ENCODE measurements at regions of chr1 and their contacts with region 1.

Region 1: DNA sequence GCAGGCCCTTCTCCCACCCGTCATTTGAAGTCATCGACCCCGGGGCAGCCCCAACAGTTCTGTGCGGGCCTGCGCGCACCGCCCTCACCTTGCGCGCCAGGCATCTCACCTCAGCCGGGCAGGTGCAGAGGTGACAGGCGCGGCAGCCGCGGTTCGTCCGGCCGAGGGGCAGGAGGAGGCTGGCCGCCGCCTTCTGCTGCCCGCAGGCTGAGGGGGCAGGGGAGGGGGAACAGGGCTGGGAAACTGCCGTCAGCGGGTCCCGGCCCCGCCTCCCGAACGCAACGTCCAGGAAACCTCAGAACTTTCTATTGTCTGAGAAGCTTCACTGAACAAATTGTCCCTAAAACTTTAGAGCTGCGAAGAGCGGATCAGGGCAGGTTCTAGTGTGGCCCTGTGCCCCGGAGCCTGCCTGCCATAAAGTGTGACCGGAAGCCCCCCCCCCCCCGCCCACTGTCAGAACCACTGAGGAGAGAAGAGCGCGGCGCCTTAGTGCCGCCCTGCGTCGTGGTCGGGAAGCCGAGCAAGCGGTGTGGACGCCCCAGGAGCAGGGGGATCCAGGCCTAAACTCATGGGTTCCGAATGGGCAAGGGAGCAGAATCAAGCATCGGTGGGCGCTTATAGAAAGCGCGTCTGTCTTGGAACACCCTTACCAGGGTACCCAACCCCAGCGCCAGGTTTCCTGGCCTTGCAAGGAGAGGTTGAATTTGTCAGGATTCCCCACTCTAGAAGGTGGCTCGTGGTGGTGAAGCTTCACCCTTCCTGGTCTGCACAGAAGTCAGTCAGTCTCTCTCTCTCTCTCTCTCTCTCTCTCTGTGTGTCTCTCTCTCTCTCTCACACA is 13.3 kb upstream of the TBX15 start:
- DNase-seq: no peak
- H3K4me3 Mint-ChIP-seq: no peak overlapping the region
- H3K27ac Mint-ChIP-seq: no peak overlapping the region
- H3K4me1 Mint-ChIP-seq: peaks cover 7% of the 10 kb centered on the region
- H3K27me3 Mint-ChIP-seq: peaks cover 75% of the 10 kb centered on the region

Region 2: DNA sequence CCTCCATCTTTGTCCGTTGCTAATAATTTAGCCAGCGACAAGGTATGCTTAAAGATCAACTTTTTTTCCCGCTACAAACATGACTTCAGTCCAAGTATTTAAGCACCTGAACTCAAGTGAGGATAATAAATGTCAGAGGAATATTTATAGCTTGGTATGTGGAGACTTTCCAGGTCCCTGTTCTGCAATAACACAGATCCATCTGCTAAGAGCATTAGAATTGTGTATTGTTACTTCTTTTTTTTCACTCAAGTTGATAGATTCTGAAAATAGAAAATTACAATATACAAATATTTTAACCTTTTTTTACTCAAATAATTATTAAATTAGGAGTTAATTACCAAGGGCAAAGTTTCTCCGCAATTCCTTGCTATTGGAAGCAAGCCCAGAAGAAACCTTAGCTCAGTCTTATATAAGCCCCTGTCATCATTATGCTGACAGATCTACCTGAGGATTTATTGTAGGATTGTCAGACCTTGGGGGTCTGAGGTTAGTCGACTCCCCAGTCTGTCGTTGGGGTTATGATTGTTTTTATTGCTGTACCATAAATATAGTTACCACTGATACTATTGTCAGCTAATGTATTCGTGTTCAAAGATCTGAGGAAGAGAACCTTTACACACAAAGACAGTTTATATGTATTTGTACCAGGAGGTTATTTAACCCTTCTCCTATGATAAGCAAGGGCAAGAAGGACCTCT is 351.1 kb before region 1 on chr1:
- intact Hi-C with region 1: no loop called
- DNase-seq: no peak
- H3K4me3 Mint-ChIP-seq: no peak overlapping the region
- H3K27ac Mint-ChIP-seq: no peak overlapping the region
- H3K4me1 Mint-ChIP-seq: no peaks in the 10 kb centered on the region
- H3K27me3 Mint-ChIP-seq: no peaks in the 10 kb centered on the region

Region 3: GRCh38 chr1:118826669-118827068 is 174.7 kb before region 1 on chr1:
- intact Hi-C with region 1: no loop called
- DNase-seq: no peak
- H3K4me3 Mint-ChIP-seq: no peak overlapping the region
- H3K27ac Mint-ChIP-seq: no peak overlapping the region
- H3K4me1 Mint-ChIP-seq: no peaks in the 10 kb centered on the region
- H3K27me3 Mint-ChIP-seq: no peaks in the 10 kb centered on the region

Region 4: DNA sequence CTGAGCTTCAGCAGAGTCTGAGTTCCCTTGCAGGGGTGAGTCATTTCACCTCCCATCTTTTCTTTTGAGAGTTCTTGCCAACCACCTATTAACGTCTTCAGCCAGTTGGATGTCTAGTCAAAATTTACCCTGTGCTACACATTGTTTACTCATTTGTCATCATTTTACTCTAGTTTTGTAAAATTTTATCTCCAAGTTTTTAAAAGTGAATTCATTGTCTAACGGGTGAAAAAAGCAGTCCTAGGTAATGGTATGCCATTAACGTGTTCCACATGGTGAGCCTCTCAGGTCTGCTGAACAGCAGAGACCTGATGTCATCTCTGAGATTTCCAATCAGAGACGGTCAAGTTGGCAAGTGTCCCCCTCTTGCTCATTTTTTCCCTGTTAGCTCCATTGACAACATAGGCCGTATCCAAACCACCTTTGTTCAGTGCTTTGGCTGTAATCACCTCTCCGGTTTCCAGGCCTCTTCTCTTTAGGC is 98.6 kb before region 1 on chr1:
- intact Hi-C with region 1: no loop called
- DNase-seq: no peak
- H3K4me3 Mint-ChIP-seq: no peak overlapping the region
- H3K27ac Mint-ChIP-seq: no peak overlapping the region
- H3K4me1 Mint-ChIP-seq: no peaks in the 10 kb centered on the region
- H3K27me3 Mint-ChIP-seq: no peaks in the 10 kb centered on the region

Region 5: DNA sequence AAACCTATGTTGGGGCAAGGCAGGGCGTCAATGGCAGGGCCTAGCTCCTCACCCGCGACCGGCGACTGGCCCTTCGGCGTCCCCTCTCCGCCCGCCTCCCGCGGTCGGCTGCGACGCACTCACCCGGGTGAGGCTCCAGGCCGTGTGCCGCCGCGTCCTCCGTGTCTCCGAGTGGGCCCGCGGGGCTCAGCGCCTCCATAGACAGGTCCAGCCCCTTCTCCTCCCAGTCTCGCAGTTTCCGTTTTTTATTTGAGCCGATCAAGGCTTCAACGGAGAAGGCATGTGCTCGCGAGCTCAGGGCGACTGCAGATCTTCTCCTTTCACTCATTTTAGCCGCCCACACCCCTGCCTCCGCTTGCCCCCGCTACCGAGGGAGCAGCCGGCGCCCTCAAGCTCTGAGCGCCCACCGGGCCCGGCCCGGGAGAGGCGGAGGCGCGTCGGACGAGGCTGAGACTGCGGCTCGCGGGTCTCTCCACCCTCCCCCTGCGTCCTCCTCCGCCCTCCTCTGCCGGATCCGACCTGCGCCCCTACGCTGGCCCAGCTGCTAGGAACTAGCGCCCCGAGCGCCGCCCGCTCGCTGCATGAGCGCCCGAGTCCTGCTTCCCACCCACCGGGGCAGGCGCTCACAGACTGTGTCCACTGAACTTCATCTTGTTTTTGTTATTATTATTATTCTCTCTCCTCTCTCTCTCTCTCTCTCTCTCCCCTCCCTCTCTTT is 13.8 kb before region 1 on chr1:
- intact Hi-C with region 1: loop called (anchors 1 kb)
- DNase-seq: no peak
- H3K4me3 Mint-ChIP-seq: no peak overlapping the region
- H3K27ac Mint-ChIP-seq: no peak overlapping the region
- H3K4me1 Mint-ChIP-seq: peaks cover 6% of the 10 kb centered on the region
- H3K27me3 Mint-ChIP-seq: peaks cover 89% of the 10 kb centered on the region